GM10248 (cell line): ENCODE measurements at regions of chr11 and their contacts with region 1.

Region 1: DNA sequence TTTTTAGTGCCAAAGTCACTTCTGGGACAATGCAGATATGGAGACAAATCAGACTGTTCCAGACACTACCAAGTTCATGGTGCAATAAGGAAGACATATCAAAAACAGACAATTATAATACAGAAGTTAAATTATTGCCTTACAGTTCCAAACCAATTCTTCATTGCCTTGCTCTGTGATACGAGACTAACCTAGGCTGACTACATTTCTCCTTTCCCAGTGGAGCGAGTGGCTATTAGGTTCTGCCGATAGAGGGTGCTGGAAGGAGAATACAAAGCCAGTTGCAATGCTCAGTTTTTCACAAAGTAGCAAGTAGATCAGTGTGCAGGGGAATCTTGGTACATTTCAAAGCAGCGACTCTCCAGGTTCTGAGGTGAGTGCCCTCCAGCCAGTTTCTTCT is 67.8 kb downstream of the FAM168A start:
- DNase-seq: no peak
- CTCF ChIP-seq: no peak

Region 2: GRCh38 chr11:73510877-73511276 is 19.2 kb before region 1 on chr11:
- CTCF ChIA-PET with region 1: interaction called, 10 read pairs
- POLR2A ChIA-PET with region 1: interaction called, 3 read pairs
- DNase-seq: no peak
- CTCF ChIP-seq: no peak

Region 3: GRCh38 chr11:73542175-73542574 is 12.1 kb after region 1 on chr11:
- CTCF ChIA-PET with region 1: interaction called, 12 read pairs
- POLR2A ChIA-PET with region 1: no interaction called
- DNase-seq: no peak
- CTCF ChIP-seq: no peak